Activated T-helper 1 cell treated with anti-CD3 and anti-CD28 coated beads, Interleukin-12 subunit alpha, Interleukin-12 subunit beta, Interleukin-2, Interleukin-4 antibody, amounts not matched to agents 30 ng/mL and 10 ng/mL and 1 ng/mL, durations not matched to agents 14 hours and 24 hours and 36 hours (primary cell): ENCODE measurements at regions of chr16 and their contacts with region 1.

Region 1: DNA sequence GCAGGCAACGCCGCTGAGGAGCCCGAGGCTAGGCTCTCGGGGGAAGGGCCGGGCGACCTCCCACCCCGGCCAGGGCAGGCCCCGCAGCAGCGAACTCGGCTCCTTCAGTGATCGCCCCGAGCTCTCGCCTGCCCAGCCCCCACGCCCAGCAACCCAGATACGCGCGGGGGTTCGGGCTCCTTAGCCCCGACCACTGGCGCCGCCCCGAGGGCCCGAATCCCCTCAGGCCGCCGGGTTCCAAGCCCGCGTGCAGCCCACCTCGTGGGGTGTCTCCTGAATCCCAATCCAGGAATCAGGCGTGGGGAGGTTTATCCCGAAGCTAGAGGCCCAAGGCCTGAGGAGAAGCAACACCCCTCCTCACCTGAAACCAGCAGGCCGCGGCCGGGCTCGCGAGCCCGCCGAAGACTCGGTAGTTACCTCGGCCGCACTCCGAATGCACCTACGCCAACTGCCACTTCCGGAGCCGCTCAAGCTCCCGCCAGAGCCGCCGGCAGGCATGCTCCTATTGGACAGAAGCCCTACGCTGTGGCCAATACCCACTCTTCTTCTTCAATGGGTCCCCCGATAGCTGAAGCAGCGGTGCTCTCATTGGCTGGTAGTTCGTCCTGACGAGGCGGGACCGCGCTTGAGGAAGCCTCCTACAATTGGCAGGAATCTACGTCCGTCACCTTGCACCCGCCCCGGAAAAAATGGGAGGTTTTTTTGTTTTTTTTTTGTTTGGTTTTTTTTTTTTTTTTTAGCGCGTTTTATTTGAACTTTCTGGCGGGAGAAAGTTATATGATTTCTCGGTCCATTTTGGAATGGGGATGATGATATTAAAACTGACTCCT is at the start of gene RFWD3:
- DNase-seq: peak; percentile 96
- H3K4me3 Mint-ChIP-seq: peak within 1 kb of the TSS; percentile 91
- H3K27ac Mint-ChIP-seq: peak within 1 kb of the TSS; percentile 96
- H3K4me1 Mint-ChIP-seq: peaks cover 43% of the 10 kb centered on the region
- H3K27me3 Mint-ChIP-seq: no peaks in the 10 kb centered on the region
- total RNA-seq, gene RFWD3: 112 and 116 TPM in 2 replicates

Region 2: GRCh38 chr16:74296432-74297144 is 370.1 kb before region 1 on chr16 and contains the start of gene PSMD7:
- intact Hi-C with region 1: loop called (anchors 1 kb)
- DNase-seq: peak; percentile 88
- H3K4me3 Mint-ChIP-seq: peak within 1 kb of the TSS; percentile 90
- H3K27ac Mint-ChIP-seq: peak within 1 kb of the TSS; percentile 93
- H3K4me1 Mint-ChIP-seq: peaks cover 27% of the 10 kb centered on the region
- H3K27me3 Mint-ChIP-seq: no peaks in the 10 kb centered on the region
- total RNA-seq, gene PSMD7: 168 and 175 TPM in 2 replicates

Region 3: GRCh38 chr16:74650966-74651567 is 15.6 kb before region 1 on chr16:
- intact Hi-C with region 1: loop called (anchors 1 kb)
- DNase-seq: no peak
- H3K4me3 Mint-ChIP-seq: no peak overlapping the region
- H3K27ac Mint-ChIP-seq: no peak overlapping the region
- H3K4me1 Mint-ChIP-seq: peaks cover 23% of the 10 kb centered on the region
- H3K27me3 Mint-ChIP-seq: no peaks in the 10 kb centered on the region

Region 4: GRCh38 chr16:74695450-74696422 is 29.1 kb after region 1 on chr16:
- intact Hi-C with region 1: loop called (anchors 1 kb)
- DNase-seq: peak; percentile 66
- H3K4me3 Mint-ChIP-seq: peak overlapping the region; percentile 84
- H3K27ac Mint-ChIP-seq: peak overlapping the region; percentile 70
- H3K4me1 Mint-ChIP-seq: peaks cover 50% of the 10 kb centered on the region
- H3K27me3 Mint-ChIP-seq: no peaks in the 10 kb centered on the region